Mammary epithelial cell (primary cell): ENCODE measurements at regions of chr3 and their contacts with region 1.

Region 1: DNA sequence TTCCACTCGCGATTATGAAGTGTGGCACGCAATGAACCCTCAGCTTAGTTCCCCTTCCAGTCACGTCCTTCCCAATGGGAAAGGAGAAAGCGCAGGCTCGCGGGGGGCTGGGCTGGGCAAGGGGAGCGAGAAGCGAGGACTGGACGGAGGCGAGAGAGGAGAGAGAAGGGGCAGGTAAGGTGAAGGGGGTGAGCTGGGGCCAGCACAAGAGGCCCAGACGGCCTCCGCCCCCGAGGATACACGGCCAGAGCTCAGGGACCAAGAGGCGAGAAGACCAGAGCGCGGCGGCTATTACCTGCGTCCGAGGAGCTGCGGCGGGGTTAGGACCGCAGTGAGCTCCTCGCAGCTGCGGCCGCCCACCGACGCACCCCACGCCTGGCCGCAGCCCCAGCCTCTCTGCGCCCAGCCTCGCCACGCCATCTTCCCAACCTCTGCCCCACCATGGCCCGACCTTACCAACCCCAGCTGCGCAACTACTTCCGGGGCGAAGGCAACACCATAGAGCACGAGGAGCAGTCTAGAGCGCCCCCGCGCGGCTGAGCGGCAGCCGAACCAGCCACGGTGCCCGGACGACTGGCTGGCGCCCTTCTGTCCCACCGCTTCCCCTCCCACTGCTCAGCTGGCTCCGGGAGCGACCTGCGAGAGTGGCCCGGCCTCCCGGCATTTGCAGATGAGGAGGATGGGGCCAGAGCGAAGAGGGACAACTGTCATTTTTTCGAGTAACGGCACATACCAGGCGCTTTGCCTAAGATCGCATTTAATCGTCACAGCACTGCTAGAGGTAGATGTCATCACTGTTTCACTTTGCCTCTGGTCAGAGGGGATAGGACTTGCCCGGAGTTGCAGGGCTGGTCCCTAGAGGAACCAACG is at the start of gene PARL:
- DNase-seq: peak; percentile 84
- H3K4me3 ChIP-seq: peak within 1 kb of the TSS; percentile 76 to 98 (median 93)
- H3K27ac ChIP-seq: peak within 1 kb of the TSS; percentile 60
- H3K4me1 ChIP-seq: peaks cover 7% of the 10 kb centered on the region
- H3K27me3 ChIP-seq: no peaks in the 10 kb centered on the region
- CTCF ChIP-seq: peak; percentile 72 to 95
- total RNA-seq, gene PARL: 33.0 to 70.4 TPM

Region 2: GRCh38 chr3:183809270-183809669 is 75.4 kb before region 1 on chr3:
- CTCF ChIA-PET with region 1: interaction called, 12 read pairs
- dilution Hi-C with region 1: no loop called
- in situ Hi-C with region 1: no loop called
- intact Hi-C with region 1: no loop called
- DNase-seq: no peak
- H3K4me3 ChIP-seq: no peak overlapping the region
- H3K27ac ChIP-seq: no peak overlapping the region
- H3K4me1 ChIP-seq: peaks cover 23% of the 10 kb centered on the region
- H3K27me3 ChIP-seq: no peaks in the 10 kb centered on the region
- CTCF ChIP-seq: no peak

Region 3: DNA sequence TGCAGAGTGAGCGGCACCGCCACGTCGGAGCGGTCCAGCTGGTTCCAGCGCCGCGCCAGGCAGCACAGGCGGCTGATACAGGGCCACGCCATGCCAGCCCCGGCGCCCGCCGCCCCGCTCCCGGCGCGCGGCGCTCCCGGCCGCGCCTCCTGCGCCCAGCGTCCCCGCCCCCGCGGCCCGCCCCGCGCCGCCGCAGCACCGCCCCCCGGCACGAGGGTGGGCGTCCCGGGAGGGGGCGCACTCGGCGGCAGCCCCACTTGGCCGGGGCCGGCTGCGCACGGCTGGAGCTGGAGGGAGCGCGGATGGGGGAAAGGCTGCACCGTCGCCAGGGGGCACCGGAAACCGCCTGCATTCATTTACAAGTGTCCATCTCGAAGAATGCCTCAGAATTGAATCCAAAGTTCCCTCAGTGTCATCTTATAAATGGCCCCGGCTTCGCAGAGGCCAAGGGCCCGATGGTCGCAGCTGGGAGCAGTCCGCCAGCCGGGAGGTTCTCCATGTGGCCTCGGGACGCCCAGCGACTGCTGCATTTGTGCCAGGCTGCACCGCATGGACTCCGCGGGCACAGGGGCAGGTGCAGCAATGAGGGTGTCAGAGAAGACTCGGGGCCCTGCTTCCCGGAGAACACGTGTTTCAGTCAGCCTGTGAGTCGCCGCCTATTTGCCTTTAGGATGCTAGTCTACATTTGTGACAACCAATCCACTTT is 59.1 kb before region 1 on chr3 and contains the start of gene MAP6D1:
- CTCF ChIA-PET with region 1: no interaction called
- dilution Hi-C with region 1: no loop called
- in situ Hi-C with region 1: no loop called
- intact Hi-C with region 1: loop called (anchors 2 kb)
- DNase-seq: peak; percentile 18
- H3K4me3 ChIP-seq: peak within 1 kb of the TSS; percentile 48 to 86 (median 80)
- H3K27ac ChIP-seq: no peak within 1 kb of the TSS
- H3K4me1 ChIP-seq: peaks cover 28% of the 10 kb centered on the region
- H3K27me3 ChIP-seq: no peaks in the 10 kb centered on the region
- CTCF ChIP-seq: peak in 1 of 2 donors; percentile 41
- total RNA-seq, gene MAP6D1: 1.1 to 4.0 TPM

Region 4: DNA sequence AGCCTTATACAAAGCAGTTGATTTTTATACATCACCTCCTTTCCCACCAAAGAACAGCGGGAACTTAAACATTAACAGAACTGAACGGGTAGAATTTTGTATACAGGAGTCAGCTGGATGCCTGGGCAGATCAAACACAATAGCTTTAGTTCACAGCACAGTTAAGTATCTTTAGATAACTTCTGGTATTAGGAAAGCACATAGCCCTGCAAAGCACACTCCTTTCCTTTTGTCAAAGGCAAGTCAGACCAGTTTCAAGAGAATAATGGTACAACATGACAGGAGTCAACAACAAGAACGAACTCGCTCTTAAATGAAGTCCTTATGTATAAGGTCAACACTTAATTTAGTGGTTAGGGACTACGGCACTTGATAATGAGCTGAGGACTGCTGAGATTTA is 106.7 kb after region 1 on chr3:
- CTCF ChIA-PET with region 1: no interaction called
- dilution Hi-C with region 1: no loop called
- in situ Hi-C with region 1: no loop called
- intact Hi-C with region 1: no loop called
- DNase-seq: peak; percentile 14
- H3K4me3 ChIP-seq: no peak overlapping the region
- H3K27ac ChIP-seq: no peak overlapping the region
- H3K4me1 ChIP-seq: no peaks in the 10 kb centered on the region
- H3K27me3 ChIP-seq: no peaks in the 10 kb centered on the region
- CTCF ChIP-seq: no peak